Heart right ventricle (tissue), 16 donors: ENCODE measurements at regions of chr20 and their contacts with region 1.

Region 1: GRCh38 chr20:45044084-45044573 is 56.8 kb downstream of the KCNS1 start:
- DNase-seq: peak in 1 of 2 donors; percentile 35
- ATAC-seq: peak in 6 of 8 donors; percentile 53 to 76 (median 60)
- H3K4me3 ChIP-seq: no peak overlapping the region
- H3K27ac ChIP-seq: no peak overlapping the region
- H3K4me1 ChIP-seq: peaks cover 0 to 51% (median 0%) of the 10 kb centered on the region in 9 donors
- H3K27me3 ChIP-seq: no peaks in the 10 kb centered on the region
- CTCF ChIP-seq: peak; percentile 65 to 89 (median 86)

Region 2: DNA sequence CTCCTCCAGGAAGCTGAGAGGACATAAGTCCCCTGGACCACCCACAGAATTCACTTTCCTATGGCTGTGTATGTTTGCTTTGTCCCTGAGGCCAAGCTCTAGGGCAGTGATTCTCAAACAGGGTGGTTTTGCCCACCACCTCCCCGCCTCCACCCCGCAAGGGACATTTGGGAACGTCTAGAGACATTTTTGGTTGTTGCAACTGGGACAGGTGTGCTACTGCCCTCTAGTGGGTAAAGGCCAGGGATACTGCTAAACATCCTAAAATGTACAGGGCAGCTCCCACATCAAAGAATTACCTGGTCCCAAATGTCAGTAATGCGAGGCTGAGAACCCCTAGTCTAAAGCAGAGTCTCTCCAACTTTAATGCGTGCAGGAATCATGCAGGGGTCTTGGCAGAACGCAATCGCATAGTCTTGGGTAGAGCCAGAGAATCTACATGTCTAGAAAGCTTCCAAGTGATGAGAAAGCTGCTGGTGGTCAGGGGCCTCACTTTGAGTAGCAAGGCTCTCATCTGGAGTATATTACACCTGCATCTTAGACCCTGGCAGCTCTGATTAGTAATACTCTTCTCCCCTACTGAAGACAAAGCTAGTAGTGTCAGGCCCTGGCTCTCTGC is 51.7 kb after region 1 on chr20:
- intact Hi-C with region 1: loop called (anchors 1 to 10 kb)
- DNase-seq: peak in 1 of 2 donors; percentile 57
- ATAC-seq: peak in 6 of 8 donors; percentile 38 to 71 (median 54)
- H3K4me3 ChIP-seq: no peak overlapping the region
- H3K27ac ChIP-seq: no peak overlapping the region
- H3K4me1 ChIP-seq: peaks cover 2 to 14% (median 7%) of the 10 kb centered on the region in 9 donors
- H3K27me3 ChIP-seq: peaks cover 0 to 54% (median 50%) of the 10 kb centered on the region in 7 donors
- CTCF ChIP-seq: peak; percentile 55 to 78 (median 72)

Region 3: GRCh38 chr20:45283548-45284057 is 239.5 kb after region 1 on chr20:
- intact Hi-C with region 1: loop called in 1 of 10 experiments (anchors 10 kb)
- DNase-seq: no peak
- ATAC-seq: no peak
- H3K4me3 ChIP-seq: no peak overlapping the region
- H3K27ac ChIP-seq: no peak overlapping the region
- H3K4me1 ChIP-seq: no peaks in the 10 kb centered on the region
- H3K27me3 ChIP-seq: peaks cover 0 to 56% (median 24%) of the 10 kb centered on the region in 7 donors
- CTCF ChIP-seq: no peak

Region 4: GRCh38 chr20:45293041-45294002 is 249.2 kb after region 1 on chr20:
- intact Hi-C with region 1: loop called in 5 of 10 experiments (anchors 2 to 10 kb)
- DNase-seq: peak; percentile 77 to 82
- ATAC-seq: peak; percentile 79 to 90 (median 86)
- H3K4me3 ChIP-seq: peak overlapping the region; percentile 13 to 61 (median 52)
- H3K27ac ChIP-seq: no peak overlapping the region
- H3K4me1 ChIP-seq: peaks cover 0 to 21% (median 9%) of the 10 kb centered on the region in 9 donors
- H3K27me3 ChIP-seq: peaks cover 5 to 56% (median 43%) of the 10 kb centered on the region in 7 donors
- CTCF ChIP-seq: peak; percentile 87 to 96 (median 93)